Mammary epithelial cell (primary cell): ENCODE measurements at regions of chrX and their contacts with region 1.

Region 1: DNA sequence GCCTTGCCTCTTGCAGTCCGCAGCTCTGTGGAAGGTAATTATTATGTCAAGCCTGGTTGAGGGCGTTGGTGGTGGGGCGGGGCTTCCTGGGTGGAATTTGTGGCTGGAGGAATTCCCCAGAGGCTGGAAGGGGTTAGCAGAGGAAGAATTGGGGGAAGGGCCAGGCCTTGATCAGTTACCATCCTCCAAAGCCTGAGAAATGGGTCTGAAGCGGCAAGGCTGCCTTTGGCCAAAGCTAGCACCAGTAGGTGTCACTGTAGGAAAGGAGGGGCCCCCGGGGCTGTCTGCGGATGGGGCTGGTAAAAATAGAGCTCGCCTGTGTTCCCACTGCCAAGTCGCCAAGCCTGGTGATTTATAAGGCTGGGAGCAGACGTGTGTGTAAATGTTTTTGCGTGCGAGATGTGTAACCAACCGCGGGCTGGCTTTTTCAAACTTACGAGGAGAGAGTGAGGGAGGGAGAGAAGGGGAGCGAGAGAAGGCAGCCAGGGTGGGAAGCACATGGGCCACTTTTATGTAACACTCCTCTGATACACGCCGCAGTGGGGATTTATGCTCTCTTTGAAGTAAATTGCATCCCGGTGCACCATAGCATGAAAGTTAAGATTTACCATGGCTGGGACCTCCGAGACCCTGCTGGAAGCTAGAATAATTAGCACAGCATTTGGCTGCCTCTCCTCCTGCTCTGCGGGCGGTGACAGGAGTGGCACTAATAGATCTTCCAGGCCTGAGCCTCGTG is 366.9 kb downstream of the BCOR start:
- DNase-seq: peak; percentile 31
- H3K4me3 ChIP-seq: no peak overlapping the region
- H3K27ac ChIP-seq: no peak overlapping the region
- H3K4me1 ChIP-seq: peaks cover 31% of the 10 kb centered on the region
- H3K27me3 ChIP-seq: no peaks in the 10 kb centered on the region
- CTCF ChIP-seq: peak; percentile 45 to 65

Region 2: GRCh38 chrX:39703307-39703706 is 27.5 kb before region 1 on chrX:
- CTCF ChIA-PET with region 1: no interaction called
- dilution Hi-C with region 1: no loop called
- in situ Hi-C with region 1: no loop called
- intact Hi-C with region 1: no loop called
- DNase-seq: no peak
- H3K4me3 ChIP-seq: no peak overlapping the region
- H3K27ac ChIP-seq: no peak overlapping the region
- H3K4me1 ChIP-seq: no peaks in the 10 kb centered on the region
- H3K27me3 ChIP-seq: peaks cover 2% of the 10 kb centered on the region
- CTCF ChIP-seq: no peak

Region 3: GRCh38 chrX:39896951-39897740 is 166.3 kb after region 1 on chrX:
- CTCF ChIA-PET with region 1: no interaction called
- dilution Hi-C with region 1: no loop called
- in situ Hi-C with region 1: no loop called
- intact Hi-C with region 1: loop called (anchors 10 kb)
- DNase-seq: peak; percentile 57
- H3K4me3 ChIP-seq: no peak overlapping the region
- H3K27ac ChIP-seq: peak overlapping the region; percentile 41
- H3K4me1 ChIP-seq: peaks cover 36% of the 10 kb centered on the region
- H3K27me3 ChIP-seq: no peaks in the 10 kb centered on the region
- CTCF ChIP-seq: peak in 1 of 2 donors; percentile 11

Region 4: DNA sequence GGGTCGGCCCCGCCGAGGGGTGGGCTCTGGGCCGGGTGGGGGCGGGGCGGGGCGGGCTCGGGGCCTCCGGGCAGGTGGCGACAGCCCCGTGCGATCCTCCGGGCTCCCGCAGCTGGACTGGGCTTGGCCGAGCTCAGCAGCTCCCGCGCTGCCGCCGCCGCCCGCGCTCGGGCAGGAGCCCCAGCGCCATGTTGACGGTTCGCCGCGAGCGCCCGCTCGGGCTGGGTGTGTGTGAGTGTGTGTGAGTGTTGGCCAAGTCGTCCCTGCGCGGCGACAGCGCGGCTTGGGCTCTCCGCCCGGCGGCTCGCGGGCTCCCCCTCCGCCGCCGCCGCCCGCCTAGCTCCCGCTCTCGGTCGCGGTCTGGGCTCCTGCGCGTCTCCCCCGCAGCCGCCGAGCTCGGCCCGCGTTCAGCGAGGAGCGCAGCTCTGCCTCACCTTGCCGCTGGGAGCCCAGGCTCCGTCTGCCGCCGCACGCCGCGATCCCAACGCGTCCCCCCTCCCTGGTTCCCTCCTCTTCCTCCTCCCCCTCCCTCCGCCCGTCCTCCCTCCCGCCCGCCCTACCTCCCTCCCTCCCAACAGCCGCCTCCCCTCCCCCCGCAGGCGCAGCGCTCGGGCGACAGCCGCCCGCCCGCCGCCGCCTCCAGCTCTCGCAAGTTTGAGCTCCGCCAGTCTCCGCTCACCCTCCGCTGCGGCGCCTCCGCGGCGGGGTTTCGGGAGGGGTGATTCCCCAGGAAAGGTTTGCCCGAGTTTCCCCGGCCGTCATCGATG is 366.9 kb after region 1 on chrX and contains the start of gene BCOR:
- CTCF ChIA-PET with region 1: no interaction called
- dilution Hi-C with region 1: no loop called
- in situ Hi-C with region 1: no loop called
- intact Hi-C with region 1: loop called (anchors 5 kb)
- DNase-seq: peak; percentile 63
- H3K4me3 ChIP-seq: peak within 1 kb of the TSS; percentile 48 to 64 (median 62)
- H3K27ac ChIP-seq: peak within 1 kb of the TSS; percentile 22
- H3K4me1 ChIP-seq: peaks cover 24% of the 10 kb centered on the region
- H3K27me3 ChIP-seq: peaks cover 23% of the 10 kb centered on the region
- CTCF ChIP-seq: no peak
- total RNA-seq, gene BCOR: 7.2 to 9.2 TPM

Region 5: DNA sequence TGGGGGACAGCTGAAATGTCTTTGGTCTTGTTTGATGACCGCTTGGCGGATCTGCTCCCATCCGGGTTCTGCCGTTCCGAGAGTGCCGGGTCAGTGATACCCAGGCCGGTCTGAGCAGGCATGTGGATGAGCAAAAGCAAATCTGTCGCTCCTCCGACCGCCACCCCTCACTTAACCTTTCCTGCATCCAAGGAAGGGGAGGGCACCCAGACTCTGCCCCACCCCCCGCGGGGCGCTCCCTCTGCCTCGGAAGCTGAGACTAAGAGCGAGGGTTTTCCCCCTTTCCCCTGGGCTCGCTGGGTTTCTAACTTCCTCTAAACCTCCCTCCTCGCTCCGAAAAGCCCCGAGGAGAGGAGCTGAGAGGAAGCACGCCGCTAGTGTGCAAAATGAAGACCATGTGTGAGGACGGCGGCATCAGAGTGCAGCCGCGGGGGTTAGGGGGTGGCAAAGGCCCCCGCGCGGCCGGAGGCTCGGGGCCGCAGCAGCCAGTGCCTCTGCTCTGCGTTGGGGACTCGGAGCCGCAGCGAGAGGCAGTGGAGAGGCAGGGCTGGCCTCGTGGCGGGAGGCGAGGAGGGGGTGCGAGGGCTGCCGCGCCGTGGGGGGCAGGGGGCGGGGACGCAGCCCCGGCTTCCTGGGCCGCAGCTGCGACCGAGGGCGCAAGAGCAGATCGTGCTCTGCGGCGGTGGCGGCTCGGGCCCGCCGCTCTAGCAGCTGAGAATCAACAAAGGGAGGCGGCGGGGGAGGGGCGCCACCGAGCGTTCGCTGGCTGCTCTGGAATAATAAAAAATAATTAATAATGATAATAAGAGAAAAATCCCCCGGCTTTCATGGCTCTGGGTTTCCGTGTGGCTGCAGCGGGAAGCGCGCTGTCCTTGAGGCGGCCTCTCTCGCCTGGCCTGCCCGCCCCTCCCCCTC is 422.8 kb after region 1 on chrX:
- CTCF ChIA-PET with region 1: no interaction called
- dilution Hi-C with region 1: no loop called
- in situ Hi-C with region 1: no loop called
- intact Hi-C with region 1: loop called (anchors 1 kb)
- DNase-seq: no peak
- H3K4me3 ChIP-seq: peak overlapping the region in 2 of 3 experiments; percentile 24 to 36
- H3K27ac ChIP-seq: no peak overlapping the region
- H3K4me1 ChIP-seq: peaks cover 18% of the 10 kb centered on the region
- H3K27me3 ChIP-seq: peaks cover 41% of the 10 kb centered on the region
- CTCF ChIP-seq: no peak

Region 6: GRCh38 chrX:41033299-41033698 is 1302.5 kb after region 1 on chrX:
- CTCF ChIA-PET with region 1: no interaction called
- dilution Hi-C with region 1: no loop called
- in situ Hi-C with region 1: no loop called
- intact Hi-C with region 1: no loop called
- DNase-seq: no peak
- H3K4me3 ChIP-seq: no peak overlapping the region
- H3K27ac ChIP-seq: no peak overlapping the region
- H3K4me1 ChIP-seq: no peaks in the 10 kb centered on the region
- H3K27me3 ChIP-seq: no peaks in the 10 kb centered on the region
- CTCF ChIP-seq: no peak